ENCODE measurements at regions of chr13 and their contacts with region 1.

Region 1: DNA sequence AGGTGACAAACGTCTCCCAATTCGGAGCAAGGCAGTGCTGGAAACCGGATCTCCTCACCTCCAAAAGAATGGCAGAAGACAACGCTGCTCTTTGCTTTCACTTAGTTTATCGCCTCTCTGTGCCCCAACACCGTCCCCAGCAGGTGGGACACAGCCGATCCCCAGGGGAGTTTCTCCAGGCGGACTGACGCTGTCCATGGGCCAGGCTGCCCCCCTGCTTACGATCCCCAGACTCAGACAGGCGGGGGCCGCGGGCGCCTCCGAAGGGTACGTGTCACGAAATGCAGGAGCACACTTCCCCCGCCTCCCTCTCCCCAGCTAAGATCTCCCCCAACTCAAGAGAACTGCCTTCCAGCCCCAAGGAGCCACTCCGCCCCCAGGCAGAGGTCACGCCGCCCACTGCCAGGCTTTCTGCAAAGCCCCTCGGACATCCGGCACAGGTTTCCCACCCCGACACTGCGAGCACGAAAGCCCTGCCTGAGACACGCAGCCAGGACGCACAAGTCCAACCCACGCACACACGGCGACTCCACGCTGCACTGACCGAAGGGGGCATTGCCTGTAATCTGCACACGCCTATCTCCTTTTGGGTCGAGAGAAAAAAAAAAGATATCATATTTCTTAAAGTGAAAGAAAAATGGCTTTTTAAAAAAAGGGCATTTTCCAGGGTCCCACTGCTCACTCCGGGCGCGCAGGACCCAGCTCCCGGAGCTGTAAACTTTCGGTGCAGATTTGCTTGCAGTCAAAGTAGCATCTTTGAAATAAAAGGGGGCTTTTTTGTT is 2.0 kb downstream of the SPRY2 start:
- DNase-seq: peak; percentile 93

Region 2: DNA sequence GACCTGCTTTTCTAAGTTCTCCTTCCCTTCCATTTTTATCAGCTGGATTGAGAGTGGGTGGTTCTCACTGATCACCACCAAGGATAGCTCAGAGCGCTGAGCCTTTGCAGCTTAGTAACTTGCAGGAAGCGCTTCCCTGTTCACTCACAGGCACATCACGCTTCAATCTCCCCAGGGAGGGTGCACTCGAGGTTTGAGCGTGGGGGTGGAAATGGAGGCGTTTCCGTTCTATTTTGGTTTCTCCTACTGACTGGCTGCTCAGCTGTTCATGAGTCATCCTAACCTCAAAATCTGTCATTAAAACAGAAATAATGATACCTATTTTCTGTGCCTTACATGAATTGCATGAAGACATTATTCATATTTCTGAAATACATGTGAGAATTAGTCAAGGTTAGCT is 290.2 kb before region 1 on chr13:
- intact Hi-C with region 1: loop called in 1 of 2 experiments (anchors 10 kb)
- DNase-seq: peak; percentile 94

Region 3: DNA sequence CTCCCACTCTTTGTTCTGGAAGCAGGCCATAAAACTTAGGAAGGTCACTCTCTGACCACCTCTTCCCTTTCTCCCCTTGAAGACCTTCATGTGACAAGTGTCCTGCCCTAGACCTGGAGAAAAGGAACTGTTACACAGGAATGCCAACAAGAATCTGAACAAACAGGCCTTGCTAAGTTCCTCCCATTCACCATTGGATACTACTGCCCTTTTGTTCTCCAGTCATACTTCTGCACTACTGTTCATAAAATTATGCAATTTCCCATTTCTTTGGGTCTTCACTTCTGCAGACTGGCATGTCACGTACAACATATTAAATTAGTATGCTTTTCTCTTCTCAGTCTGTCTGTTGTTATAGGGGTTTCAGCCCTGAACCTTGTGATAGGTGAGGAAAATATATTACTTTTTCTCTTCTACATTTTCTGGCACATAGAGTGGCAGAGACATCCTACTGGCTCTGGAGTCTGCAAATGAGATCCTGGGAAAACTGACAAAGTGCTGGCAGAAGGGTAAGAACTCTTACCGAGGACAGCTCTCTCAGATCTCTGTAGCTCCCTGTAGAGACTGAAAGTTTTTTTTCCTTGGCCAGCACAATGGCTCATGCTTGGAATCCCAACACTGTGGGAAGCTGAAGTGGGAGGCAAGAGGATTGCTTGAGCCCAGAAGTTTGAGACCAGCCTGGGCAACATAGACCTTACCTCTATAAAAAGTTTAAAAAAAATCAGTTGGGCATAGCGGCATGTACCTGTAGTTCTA is 89.5 kb after region 1 on chr13:
- intact Hi-C with region 1: no loop called
- DNase-seq: no peak

Region 4: GRCh38 chr13:80666782-80667552 is 328.0 kb after region 1 on chr13:
- intact Hi-C with region 1: no loop called
- DNase-seq: no peak

Region 5: DNA sequence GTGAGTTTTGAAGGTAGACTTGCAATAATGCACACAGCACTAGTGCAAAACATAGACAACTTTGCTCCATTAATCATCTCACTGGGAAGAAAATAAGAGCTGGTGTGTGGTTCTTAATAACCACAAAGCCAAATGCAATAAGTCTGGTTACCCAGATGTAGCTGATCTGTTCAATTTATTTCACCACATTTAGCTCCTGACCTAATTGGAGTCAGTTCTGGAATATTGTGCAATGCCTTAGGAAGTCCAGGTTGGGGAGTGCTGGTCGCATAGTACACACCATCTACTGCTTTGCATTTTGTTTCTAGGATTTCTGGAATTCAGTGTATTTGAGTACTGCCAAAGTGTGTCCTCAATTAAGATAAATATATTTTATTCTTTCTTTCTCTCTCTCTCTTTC is 485.3 kb after region 1 on chr13:
- intact Hi-C with region 1: no loop called
- DNase-seq: no peak

Measured in posterior vena cava (tissue), 2 donors.